HepG2 (cell line): ENCODE measurements at regions of chr2 and their contacts with region 1.

Region 1: GRCh38 chr2:196926562-196927375 is at the start of gene PGAP1:
- DNase-seq: peak; percentile 90
- ATAC-seq: peak; percentile 93
- H3K4me3 ChIP-seq: peak within 1 kb of the TSS; percentile 96 to 100 (median 98)
- H3K27ac ChIP-seq: peak within 1 kb of the TSS; percentile 84
- H3K4me1 ChIP-seq: peaks cover 29% of the 10 kb centered on the region
- H3K27me3 ChIP-seq: no peaks in the 10 kb centered on the region; a peak in 2 of 5 replicates
- CTCF ChIP-seq: peak; percentile 22; the same call in 1 of the 2 replicates
- EP300 ChIP-seq: peak in 1 of 2 experiments; percentile 10; a peak in 2 of 4 replicates
- POLR2A ChIP-seq: peak; percentile 54 to 74; a peak in 3 of 4 replicates
- RAD21 ChIP-seq: 0 out of 2 replicates have a peak, but pooled peaks have one; percentile 9
- total RNA-seq, gene PGAP1: 4.8 and 6.4 TPM in 2 replicates

Region 2: DNA sequence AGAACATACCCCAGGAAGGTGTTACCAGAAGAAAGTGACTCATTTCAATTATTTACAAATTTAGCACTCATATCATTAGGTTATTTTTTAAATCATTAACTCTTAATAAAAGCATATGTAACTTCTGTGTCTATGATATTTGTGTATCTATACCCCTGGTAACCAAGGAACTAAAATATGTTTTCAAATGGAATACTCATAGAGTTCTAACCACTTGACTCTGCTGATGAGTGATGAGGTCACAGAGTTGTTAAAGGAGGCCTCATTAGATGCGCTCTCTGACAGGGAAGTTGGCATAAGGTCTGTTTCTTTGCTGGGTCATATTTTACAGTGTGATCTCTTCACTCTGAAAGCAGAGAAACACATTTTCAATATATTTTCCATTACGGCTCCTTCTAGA is 213.9 kb before region 1 on chr2:
- CTCF ChIA-PET with region 1: no interaction called
- POLR2A ChIA-PET with region 1: no interaction called
- in situ Hi-C with region 1: no loop called
- intact Hi-C with region 1: no loop called
- DNase-seq: no peak
- ATAC-seq: no peak
- H3K4me3 ChIP-seq: no peak overlapping the region
- H3K27ac ChIP-seq: no peak overlapping the region
- H3K4me1 ChIP-seq: no peaks in the 10 kb centered on the region
- H3K27me3 ChIP-seq: no peaks in the 10 kb centered on the region
- CTCF ChIP-seq: no peak
- EP300 ChIP-seq: no peak
- POLR2A ChIP-seq: no peak
- RAD21 ChIP-seq: no peak

Region 3: GRCh38 chr2:196798980-196799379 is 127.8 kb before region 1 on chr2:
- CTCF ChIA-PET with region 1: no interaction called
- POLR2A ChIA-PET with region 1: interaction called, 7 read pairs
- in situ Hi-C with region 1: no loop called
- intact Hi-C with region 1: loop called (anchors 1 kb)
- DNase-seq: peak; percentile 23
- ATAC-seq: peak; percentile 53
- H3K4me3 ChIP-seq: peak overlapping the region; percentile 66 to 99 (median 83)
- H3K27ac ChIP-seq: peak overlapping the region; percentile 73
- H3K4me1 ChIP-seq: peaks cover 37% of the 10 kb centered on the region
- H3K27me3 ChIP-seq: peaks cover 0 to 4% of the 10 kb centered on the region in 2 experiments; a peak in 1 of 5 replicates
- CTCF ChIP-seq: no peak
- EP300 ChIP-seq: no peak
- POLR2A ChIP-seq: no peak
- RAD21 ChIP-seq: no peak

Region 4: DNA sequence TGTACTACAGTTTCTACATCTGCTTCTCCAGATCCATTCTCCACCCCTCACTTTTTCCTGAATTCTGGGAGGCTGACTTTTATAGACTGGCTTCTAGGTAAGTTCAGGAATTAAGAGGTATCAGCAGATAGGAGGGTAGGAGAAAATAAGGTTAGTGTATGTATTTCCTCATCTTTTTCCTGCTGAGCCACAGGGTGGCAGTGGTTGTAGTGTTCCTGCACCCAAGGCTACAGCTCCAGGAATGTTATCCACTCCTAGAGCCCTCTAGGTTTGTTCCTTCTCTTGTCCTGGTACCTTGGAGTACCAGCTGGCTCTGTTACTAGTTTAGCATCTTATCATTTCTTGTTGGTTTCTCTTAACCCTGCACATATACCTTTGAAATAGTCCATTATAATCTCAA is 76.9 kb before region 1 on chr2:
- CTCF ChIA-PET with region 1: no interaction called
- POLR2A ChIA-PET with region 1: no interaction called
- in situ Hi-C with region 1: no loop called
- intact Hi-C with region 1: loop called (anchors 5 kb)
- DNase-seq: peak; percentile 14
- ATAC-seq: peak; percentile 82
- H3K4me3 ChIP-seq: no peak overlapping the region
- H3K27ac ChIP-seq: no peak overlapping the region
- H3K4me1 ChIP-seq: peaks cover 6% of the 10 kb centered on the region; the same call in 1 of the 2 replicates
- H3K27me3 ChIP-seq: no peaks in the 10 kb centered on the region
- CTCF ChIP-seq: peak; percentile 32; the same call in 1 of the 2 replicates
- EP300 ChIP-seq: no peak
- POLR2A ChIP-seq: no peak
- RAD21 ChIP-seq: no peak